ENCODE measurements at regions of chr17 and their contacts with region 1.

Region 1: DNA sequence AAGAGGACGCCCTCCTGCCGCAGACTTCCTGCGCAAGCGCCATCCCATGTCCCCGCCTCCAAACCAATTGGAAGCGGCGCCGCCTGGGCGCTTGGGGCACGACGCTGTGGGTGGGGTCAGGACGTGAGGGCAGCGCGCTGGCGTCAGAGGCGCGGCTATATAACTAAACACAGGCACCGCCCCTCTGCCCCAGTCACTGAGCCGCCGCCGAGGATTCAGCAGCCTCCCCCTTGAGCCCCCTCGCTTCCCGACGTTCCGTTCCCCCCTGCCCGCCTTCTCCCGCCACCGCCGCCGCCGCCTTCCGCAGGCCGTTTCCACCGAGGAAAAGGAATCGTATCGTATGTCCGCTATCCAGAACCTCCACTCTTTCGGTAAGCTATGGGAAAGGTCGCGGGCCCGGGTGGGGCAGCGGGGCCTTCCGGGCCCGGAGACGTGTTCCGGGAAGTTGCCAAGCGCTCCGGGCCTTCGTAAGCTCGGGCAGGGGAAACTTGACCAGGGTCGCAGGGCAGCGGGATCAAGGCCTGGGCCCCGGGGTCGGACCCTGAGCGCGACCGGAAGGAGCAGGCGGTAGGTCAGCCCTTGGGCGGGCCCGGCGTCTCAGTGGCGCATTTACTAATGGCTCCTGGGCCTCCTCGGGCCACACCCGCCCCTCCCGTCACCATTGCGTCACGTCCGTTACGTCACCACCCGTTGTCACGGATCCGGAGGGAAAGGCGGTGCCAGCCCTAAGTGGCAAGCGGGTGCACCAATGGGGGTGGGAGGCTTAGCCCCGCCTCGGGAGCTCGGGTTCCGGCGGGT is at the start of gene EIF1:
- DNase-seq: peak; percentile 96 to 100 (median 98)
- ATAC-seq: peak; percentile 83
- H3K4me3 ChIP-seq: peak within 1 kb of the TSS; percentile 58
- H3K27ac ChIP-seq: peak within 1 kb of the TSS; percentile 92
- H3K4me1 ChIP-seq: peaks cover 11 to 18% of the 10 kb centered on the region in 2 experiments; a peak in 4 of 5 replicates
- H3K27me3 ChIP-seq: no peaks in the 10 kb centered on the region
- CTCF ChIP-seq: no peak
- EP300 ChIP-seq: peak; percentile 59
- POLR2A ChIP-seq: peak; percentile 100
- RAD21 ChIP-seq: no peak
- polyA plus RNA-seq, gene EIF1: 1,018 to 1,204 TPM

Region 2: DNA sequence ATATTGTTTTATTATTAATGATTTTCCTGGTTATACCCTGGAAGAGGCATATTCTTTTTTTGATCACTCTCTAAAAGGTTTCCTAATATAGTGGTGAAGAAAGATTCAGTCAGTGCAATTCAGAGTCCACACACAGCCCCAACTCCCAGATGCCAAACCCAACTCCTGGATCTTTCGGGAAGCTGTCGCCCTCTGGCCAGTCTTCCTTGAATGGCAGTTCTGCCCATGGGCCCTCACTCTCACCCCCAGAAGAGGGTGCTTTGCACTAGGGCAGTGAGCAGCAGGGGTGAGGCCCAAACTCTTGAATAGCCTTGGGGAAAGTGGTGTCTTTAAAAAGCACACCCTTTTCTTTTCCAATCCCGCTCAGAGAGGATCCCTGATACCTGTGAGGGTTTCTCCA is 232.7 kb before region 1 on chr17:
- CTCF ChIA-PET with region 1: no interaction called
- POLR2A ChIA-PET with region 1: no interaction called
- in situ Hi-C with region 1: no loop called
- intact Hi-C with region 1: no loop called
- DNase-seq: no peak
- ATAC-seq: no peak
- H3K4me3 ChIP-seq: no peak overlapping the region
- H3K27ac ChIP-seq: no peak overlapping the region
- H3K4me1 ChIP-seq: no peaks in the 10 kb centered on the region; a peak in 1 of 5 replicates
- H3K27me3 ChIP-seq: peaks cover 0 to 10% of the 10 kb centered on the region in 2 experiments; a peak in 2 of 5 replicates
- CTCF ChIP-seq: peak in 2 of 3 experiments; percentile 17 to 27; a peak in 2 of 6 replicates
- EP300 ChIP-seq: no peak
- POLR2A ChIP-seq: no peak
- RAD21 ChIP-seq: no peak; a peak in 1 of 4 replicates

Region 3: GRCh38 chr17:41530062-41531051 is 158.5 kb before region 1 on chr17:
- CTCF ChIA-PET with region 1: no interaction called
- POLR2A ChIA-PET with region 1: interaction called, 23 read pairs
- in situ Hi-C with region 1: no loop called
- intact Hi-C with region 1: no loop called
- DNase-seq: peak; percentile 88 to 96 (median 90)
- ATAC-seq: peak; percentile 76
- H3K4me3 ChIP-seq: peak overlapping the region; percentile 11
- H3K27ac ChIP-seq: peak overlapping the region; percentile 94
- H3K4me1 ChIP-seq: peaks cover 45 to 58% of the 10 kb centered on the region in 2 experiments
- H3K27me3 ChIP-seq: no peaks in the 10 kb centered on the region
- CTCF ChIP-seq: no peak; a peak in 1 of 6 replicates
- EP300 ChIP-seq: peak; percentile 89
- POLR2A ChIP-seq: no peak; the same call in 1 of the 2 replicates
- RAD21 ChIP-seq: 0 out of 4 replicates have a peak, but pooled peaks of 1 of the 2 experiments have one; percentile 5

Region 4: GRCh38 chr17:41710468-41711090 is 21.7 kb after region 1 on chr17:
- CTCF ChIA-PET with region 1: no interaction called
- POLR2A ChIA-PET with region 1: interaction called, 174 read pairs
- in situ Hi-C with region 1: no loop called
- intact Hi-C with region 1: no loop called
- DNase-seq: peak in 1 of 4 experiments; percentile 36
- ATAC-seq: no peak
- H3K4me3 ChIP-seq: no peak overlapping the region
- H3K27ac ChIP-seq: no peak overlapping the region
- H3K4me1 ChIP-seq: no peaks in the 10 kb centered on the region; a peak in 3 of 5 replicates
- H3K27me3 ChIP-seq: peaks cover 8 to 14% of the 10 kb centered on the region in 2 experiments
- CTCF ChIP-seq: no peak
- EP300 ChIP-seq: no peak
- POLR2A ChIP-seq: no peak
- RAD21 ChIP-seq: no peak

Region 5: DNA sequence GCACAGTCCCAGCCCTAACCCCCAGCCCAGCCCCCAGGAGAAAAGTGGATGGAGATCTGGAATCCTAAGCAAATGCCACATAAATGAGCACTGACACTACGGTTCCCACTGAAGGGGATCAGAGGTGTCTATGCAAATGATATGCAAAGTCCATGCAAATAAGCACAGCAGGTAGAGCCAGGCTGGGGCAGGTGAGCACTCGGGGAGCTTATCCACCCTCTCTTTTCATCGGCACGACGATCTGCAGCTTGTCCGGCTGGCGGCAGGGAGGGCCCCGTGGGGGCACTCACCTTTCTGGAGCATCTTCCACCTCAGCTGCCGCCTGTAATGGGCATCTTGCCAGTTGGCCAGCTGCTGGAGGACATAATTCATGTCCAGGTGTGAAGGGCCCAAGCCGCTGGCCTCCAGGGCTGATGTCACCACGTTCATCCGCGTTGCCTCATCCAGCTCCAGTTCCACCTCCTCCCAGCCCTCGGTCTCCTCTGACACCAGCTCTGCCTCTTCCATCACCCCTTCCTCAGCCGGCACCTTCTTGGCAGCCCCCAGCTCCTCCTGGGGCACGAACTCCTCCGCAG is 35.7 kb after region 1 on chr17:
- CTCF ChIA-PET with region 1: no interaction called
- POLR2A ChIA-PET with region 1: interaction called, 76 read pairs
- in situ Hi-C with region 1: no loop called
- intact Hi-C with region 1: no loop called
- DNase-seq: no peak
- ATAC-seq: no peak
- H3K4me3 ChIP-seq: no peak overlapping the region
- H3K27ac ChIP-seq: no peak overlapping the region
- H3K4me1 ChIP-seq: peaks cover 3 to 29% of the 10 kb centered on the region in 2 experiments; a peak in 3 of 5 replicates
- H3K27me3 ChIP-seq: no peaks in the 10 kb centered on the region
- CTCF ChIP-seq: no peak
- EP300 ChIP-seq: no peak
- POLR2A ChIP-seq: no peak
- RAD21 ChIP-seq: no peak

Region 6: GRCh38 chr17:41738077-41738735 is 49.3 kb after region 1 on chr17:
- CTCF ChIA-PET with region 1: no interaction called
- POLR2A ChIA-PET with region 1: interaction called, 10 read pairs
- in situ Hi-C with region 1: no loop called
- intact Hi-C with region 1: no loop called
- DNase-seq: peak; percentile 91 to 93 (median 92)
- ATAC-seq: peak; percentile 97
- H3K4me3 ChIP-seq: no peak overlapping the region
- H3K27ac ChIP-seq: peak overlapping the region; percentile 60; the same call in 2 of the 3 replicates
- H3K4me1 ChIP-seq: peaks cover 4 to 25% of the 10 kb centered on the region in 2 experiments; a peak in 4 of 5 replicates
- H3K27me3 ChIP-seq: peaks cover 26 to 31% of the 10 kb centered on the region in 2 experiments
- CTCF ChIP-seq: peak; percentile 93 to 98 (median 97)
- EP300 ChIP-seq: no peak
- POLR2A ChIP-seq: no peak
- RAD21 ChIP-seq: peak; percentile 99 to 100

Region 7: DNA sequence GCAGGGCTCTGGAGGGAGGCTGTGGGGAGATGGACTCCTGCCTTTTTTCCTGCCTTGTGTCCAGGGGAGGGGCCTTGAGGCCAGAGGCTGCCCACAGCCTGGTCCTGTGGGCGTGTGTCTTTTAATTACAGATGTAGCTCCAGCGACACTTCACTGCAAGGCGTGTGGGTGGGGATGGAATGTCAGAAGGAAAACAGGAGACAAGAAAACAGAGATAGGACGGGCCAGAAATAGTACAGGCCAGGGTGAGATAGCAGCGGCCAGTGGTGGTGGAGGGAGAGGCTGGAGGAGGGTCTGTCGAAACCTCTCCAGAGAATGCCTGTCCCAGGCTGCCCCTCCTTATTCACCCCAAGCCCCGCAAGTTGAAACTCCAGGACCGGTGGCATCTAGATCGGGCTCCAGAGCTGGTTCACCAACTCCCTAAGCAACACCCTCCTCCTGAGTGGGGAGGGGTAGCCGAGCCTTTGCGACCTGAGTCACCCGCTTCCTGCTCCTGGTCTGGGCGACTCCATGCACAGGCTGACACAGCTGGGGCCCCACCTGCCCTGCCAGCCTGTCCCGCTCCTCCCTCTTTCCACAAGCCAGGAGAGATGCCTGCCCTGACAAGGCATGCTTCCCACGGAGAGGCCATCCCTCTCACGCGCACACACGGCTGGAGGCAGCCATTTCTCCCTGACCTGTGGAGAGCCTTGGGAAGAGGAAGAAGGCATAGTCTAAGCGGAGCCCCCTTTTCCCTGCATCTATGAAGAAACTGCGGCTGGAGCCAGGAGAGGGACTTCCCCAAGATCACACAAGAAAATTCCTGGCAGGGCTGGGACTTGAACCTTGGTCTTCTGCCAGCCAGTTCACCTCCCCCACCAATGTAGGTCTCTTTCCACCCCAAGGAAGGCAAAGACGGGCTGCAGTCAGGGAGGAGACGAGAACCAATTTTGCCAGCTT is 104.2 kb after region 1 on chr17:
- CTCF ChIA-PET with region 1: no interaction called
- POLR2A ChIA-PET with region 1: interaction called, 17 read pairs
- in situ Hi-C with region 1: no loop called
- intact Hi-C with region 1: no loop called
- DNase-seq: peak; percentile 77 to 96 (median 83)
- ATAC-seq: peak; percentile 84
- H3K4me3 ChIP-seq: peak overlapping the region; percentile 23
- H3K27ac ChIP-seq: peak overlapping the region; percentile 90
- H3K4me1 ChIP-seq: peaks cover 44 to 52% of the 10 kb centered on the region in 2 experiments
- H3K27me3 ChIP-seq: no peaks in the 10 kb centered on the region
- CTCF ChIP-seq: no peak
- EP300 ChIP-seq: peak; percentile 66; the same call in 1 of the 2 replicates
- POLR2A ChIP-seq: peak; percentile 72
- RAD21 ChIP-seq: no peak